Activated CD4-positive, alpha-beta T cell treated with anti-CD3 and anti-CD28 coated beads, Interleukin-2, amount 10 ng/mL, durations not matched to agents 24 days and 14 days (primary cell): ENCODE measurements at regions of chr9 and their contacts with region 1.

Region 1: GRCh38 chr9:101458955-101459631 is 23.5 kb upstream of the ALDOB start:
- DNase-seq: peak; percentile 76
- H3K4me3 Mint-ChIP-seq: no peak overlapping the region
- H3K27ac Mint-ChIP-seq: no peak overlapping the region
- H3K4me1 Mint-ChIP-seq: no peaks in the 10 kb centered on the region
- H3K27me3 Mint-ChIP-seq: peaks cover 10% of the 10 kb centered on the region

Region 2: GRCh38 chr9:101093620-101094019 is 365.5 kb before region 1 on chr9:
- intact Hi-C with region 1: no loop called
- DNase-seq: no peak
- H3K4me3 Mint-ChIP-seq: no peak overlapping the region
- H3K27ac Mint-ChIP-seq: no peak overlapping the region
- H3K4me1 Mint-ChIP-seq: no peaks in the 10 kb centered on the region
- H3K27me3 Mint-ChIP-seq: no peaks in the 10 kb centered on the region

Region 3: DNA sequence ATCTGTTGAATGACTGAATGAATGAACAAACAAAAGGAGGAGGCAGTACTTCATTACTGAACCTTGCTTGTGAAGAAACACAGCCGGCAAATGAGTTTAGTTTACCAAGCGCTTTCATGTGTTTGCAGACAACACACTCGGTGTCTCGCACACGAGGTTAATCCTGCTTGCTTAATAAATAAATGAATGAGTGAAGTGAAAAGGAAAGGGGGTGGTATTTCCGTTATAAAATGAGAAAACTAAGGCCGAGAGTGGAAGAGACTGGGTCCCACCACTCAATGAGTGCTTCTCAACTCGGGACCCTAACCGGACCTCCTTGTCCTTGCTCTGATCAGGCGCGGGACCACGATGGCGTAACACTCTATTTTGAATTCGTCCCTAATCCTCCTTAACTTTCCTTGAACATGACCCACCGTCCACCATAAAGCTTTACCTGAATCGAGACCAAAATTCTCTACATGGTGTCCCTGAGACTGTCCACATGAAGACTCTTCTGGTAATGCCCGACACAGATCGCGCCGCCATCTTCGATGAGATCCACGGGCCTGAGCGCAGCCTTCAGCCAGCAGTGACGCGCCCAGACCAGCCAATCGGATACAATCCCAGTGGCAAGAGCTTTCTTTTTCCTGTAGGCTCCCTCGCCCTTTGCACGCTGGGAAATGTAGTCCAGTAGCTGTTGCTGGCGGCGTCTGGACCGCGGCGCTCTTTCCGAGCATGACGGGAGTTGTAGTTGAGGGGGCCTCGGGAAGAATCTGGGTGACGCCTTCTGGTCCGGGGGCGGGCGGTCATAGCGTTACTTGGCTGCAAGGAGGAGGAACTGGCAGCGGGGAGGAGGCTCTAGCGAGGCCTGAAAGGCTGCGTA is 60.8 kb before region 1 on chr9 and contains the starts of genes MRPL50 and ZNF189:
- intact Hi-C with region 1: loop called (anchors 5 kb)
- DNase-seq: peak; percentile 98
- H3K4me3 Mint-ChIP-seq: peak within 1 kb of the TSS; percentile 94
- H3K27ac Mint-ChIP-seq: peak within 1 kb of the TSS; percentile 98
- H3K4me1 Mint-ChIP-seq: peaks cover 44% of the 10 kb centered on the region
- H3K27me3 Mint-ChIP-seq: no peaks in the 10 kb centered on the region
- total RNA-seq, gene MRPL50: 18.6 and 19.8 TPM in 2 replicates
- total RNA-seq, gene ZNF189: 11.7 and 12.7 TPM in 2 replicates

Region 4: GRCh38 chr9:101479338-101480030 is 20.4 kb after region 1 on chr9:
- intact Hi-C with region 1: no loop called
- DNase-seq: no peak
- H3K4me3 Mint-ChIP-seq: no peak overlapping the region
- H3K27ac Mint-ChIP-seq: no peak overlapping the region
- H3K4me1 Mint-ChIP-seq: no peaks in the 10 kb centered on the region
- H3K27me3 Mint-ChIP-seq: peaks cover 30% of the 10 kb centered on the region